WTC11 (cell line): ENCODE measurements at regions of chrX and their contacts with region 1.

Region 1: GRCh38 chrX:44244008-44244407 is 99.5 kb downstream of the EFHC2 start:
- DNase-seq: no peak
- ATAC-seq: no peak
- H3K4me3 Mint-ChIP-seq: no peak overlapping the region
- H3K27ac Mint-ChIP-seq: no peak overlapping the region
- H3K4me1 Mint-ChIP-seq: peaks cover 42% of the 10 kb centered on the region
- H3K27me3 Mint-ChIP-seq: no peaks in the 10 kb centered on the region
- CTCF ChIP-seq: no peak

Region 2: DNA sequence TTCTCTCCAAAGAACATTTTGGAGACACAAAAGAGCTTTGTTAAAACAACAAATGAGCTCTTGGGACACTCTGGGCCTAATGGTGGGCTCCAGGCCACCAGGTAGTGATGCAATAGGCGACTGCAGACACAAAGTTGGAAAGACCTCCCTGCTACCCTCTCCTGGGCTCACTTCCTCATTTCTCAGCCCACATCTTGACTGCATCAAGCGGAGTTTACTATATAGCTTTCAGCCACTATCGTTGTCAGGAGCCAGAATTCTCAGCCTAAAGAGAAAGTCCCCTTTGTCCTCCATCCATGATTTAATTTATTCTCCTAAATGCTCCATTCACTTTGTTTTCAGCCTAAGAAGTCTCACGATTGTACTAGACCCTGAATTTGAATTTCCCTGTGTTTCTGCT is 15.4 kb before region 1 on chrX:
- CTCF ChIA-PET with region 1: interaction called, 13 read pairs
- POLR2A ChIA-PET with region 1: no interaction called
- DNase-seq: no peak
- ATAC-seq: no peak
- H3K4me3 Mint-ChIP-seq: no peak overlapping the region
- H3K27ac Mint-ChIP-seq: no peak overlapping the region
- H3K4me1 Mint-ChIP-seq: peaks cover 23% of the 10 kb centered on the region
- H3K27me3 Mint-ChIP-seq: no peaks in the 10 kb centered on the region
- CTCF ChIP-seq: no peak